ENCODE measurements at regions of chr3 and their contacts with region 1.

Region 1: DNA sequence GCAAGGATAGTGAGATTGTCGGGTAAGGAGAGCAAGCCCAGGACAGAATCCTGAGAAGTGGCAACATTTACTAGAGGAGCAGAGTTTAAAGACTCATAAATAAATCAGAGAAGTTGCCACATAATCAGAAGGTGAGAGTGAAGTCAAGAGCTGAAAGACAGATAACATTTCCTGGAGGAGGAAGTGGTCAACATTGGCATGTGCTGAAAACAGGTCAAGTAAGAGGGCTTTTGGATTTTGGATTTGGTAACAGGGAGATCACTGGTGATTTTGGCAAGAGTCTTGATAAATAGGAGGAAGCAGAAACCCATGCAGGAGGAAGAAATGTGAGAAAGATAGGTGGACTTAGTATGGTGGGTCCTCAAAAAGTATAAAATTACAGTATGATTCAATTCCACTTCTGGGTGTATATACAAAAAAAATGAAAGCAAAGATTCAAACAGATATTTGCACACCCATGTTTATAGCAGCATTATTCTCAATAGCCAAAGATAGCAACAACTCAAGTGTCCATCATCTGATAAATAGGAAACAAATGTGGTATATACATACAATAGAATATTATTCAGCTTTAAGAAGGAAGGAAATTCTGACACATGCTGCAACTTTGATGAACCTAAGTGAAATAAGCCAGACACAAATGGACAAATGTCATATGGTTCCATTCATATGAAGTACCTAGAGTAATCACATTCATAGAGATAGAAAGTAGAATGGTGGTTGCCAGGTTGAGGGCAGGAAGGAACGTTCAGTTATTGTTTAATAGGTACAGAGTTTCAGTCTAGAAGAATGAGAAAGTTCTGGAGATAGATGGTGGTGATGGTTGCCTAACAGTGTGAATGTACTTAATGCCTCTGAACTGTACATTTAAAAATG is 27.3 kb upstream of the MBNL1 start:
- DNase-seq: no peak
- H3K4me3 Mint-ChIP-seq: peak overlapping the region; percentile 41
- H3K27ac Mint-ChIP-seq: peak overlapping the region; percentile 97
- H3K4me1 Mint-ChIP-seq: peaks cover 53% of the 10 kb centered on the region
- H3K27me3 Mint-ChIP-seq: no peaks in the 10 kb centered on the region

Region 2: DNA sequence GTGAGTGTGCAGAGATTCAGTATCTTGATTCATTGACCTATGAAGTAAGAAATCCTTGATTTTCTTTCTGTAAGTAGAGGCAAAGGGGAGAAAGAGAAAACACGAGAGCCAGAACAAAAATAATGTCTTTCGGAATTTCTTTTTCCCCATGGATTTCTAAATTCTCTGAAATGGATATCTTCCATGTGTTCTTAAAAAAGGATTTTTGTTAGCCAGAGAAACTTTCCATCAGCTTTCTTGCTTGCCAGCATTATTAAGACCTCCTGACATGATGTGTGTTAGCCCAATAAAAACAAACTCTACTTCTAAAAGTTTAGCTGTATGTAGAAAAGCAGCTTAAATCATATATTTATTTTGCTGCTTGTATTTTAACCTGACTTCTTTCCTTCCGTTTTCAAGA is 630.0 kb before region 1 on chr3:
- CTCF ChIA-PET with region 1: no interaction called
- POLR2A ChIA-PET with region 1: no interaction called
- DNase-seq: no peak
- H3K4me3 Mint-ChIP-seq: no peak overlapping the region
- H3K27ac Mint-ChIP-seq: no peak overlapping the region
- H3K4me1 Mint-ChIP-seq: no peaks in the 10 kb centered on the region
- H3K27me3 Mint-ChIP-seq: no peaks in the 10 kb centered on the region

Region 3: DNA sequence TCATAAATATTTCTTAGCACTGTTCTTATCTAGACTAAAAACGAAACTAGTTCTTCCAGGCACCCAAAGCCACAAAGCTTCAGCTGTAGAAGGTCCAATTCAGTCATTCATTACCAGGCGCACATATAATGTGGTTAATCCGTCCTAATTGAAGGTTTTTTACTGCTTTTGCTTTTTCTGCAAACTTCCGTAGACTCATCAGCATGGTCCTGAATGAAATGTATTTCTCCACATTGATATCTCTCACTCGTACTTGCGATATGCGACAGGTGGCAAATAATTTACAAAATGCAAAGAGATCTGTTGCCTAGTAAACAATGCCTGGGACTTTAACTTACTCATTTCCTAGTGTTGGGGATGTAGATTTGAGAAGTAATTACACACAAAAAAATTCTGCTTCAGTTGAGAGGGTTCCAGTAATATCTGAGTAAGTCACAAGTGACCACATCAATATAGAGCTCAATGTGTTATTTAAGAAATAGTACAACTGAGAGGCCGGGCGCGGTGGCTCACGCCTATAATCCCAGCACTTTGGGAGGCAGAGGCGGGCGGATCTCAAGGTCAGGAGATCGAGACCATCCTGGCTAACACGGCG is 47.6 kb before region 1 on chr3:
- CTCF ChIA-PET with region 1: interaction called, 13 read pairs
- POLR2A ChIA-PET with region 1: interaction called, 139 read pairs
- DNase-seq: peak; percentile 48
- H3K4me3 Mint-ChIP-seq: peak overlapping the region; percentile 75
- H3K27ac Mint-ChIP-seq: peak overlapping the region; percentile 87
- H3K4me1 Mint-ChIP-seq: peaks cover 80% of the 10 kb centered on the region
- H3K27me3 Mint-ChIP-seq: no peaks in the 10 kb centered on the region

Region 4: DNA sequence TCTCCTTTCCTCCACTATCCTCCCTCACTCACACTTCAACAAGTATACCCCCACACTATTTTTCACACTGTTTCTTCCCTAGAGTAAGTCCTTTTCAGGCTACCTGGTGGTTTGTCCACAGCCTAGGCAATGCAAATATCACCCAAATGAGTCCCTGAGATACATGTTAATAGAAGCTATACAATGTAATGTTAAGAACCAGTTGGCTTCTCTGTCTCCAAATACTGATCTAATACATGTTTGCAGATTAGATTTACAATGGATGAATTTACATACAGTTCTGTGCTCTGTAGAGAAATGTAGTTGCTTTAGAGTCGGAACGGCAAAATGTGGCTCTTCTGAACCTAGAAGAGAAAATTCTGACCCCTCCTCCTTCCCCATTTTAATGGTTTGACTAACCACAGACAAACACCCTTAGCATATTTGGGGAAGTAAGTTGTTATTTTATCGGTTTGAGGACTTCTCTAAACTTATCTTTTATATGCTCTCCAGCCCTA is 36.2 kb before region 1 on chr3:
- CTCF ChIA-PET with region 1: interaction called, 15 read pairs
- POLR2A ChIA-PET with region 1: interaction called, 139 read pairs
- DNase-seq: no peak
- H3K4me3 Mint-ChIP-seq: peak overlapping the region; percentile 78
- H3K27ac Mint-ChIP-seq: peak overlapping the region; percentile 80
- H3K4me1 Mint-ChIP-seq: peaks cover 65% of the 10 kb centered on the region
- H3K27me3 Mint-ChIP-seq: no peaks in the 10 kb centered on the region

Region 5: GRCh38 chr3:152258448-152259393 is 17.3 kb after region 1 on chr3:
- CTCF ChIA-PET with region 1: interaction called, 13 read pairs
- POLR2A ChIA-PET with region 1: interaction called, 171 read pairs
- DNase-seq: peak; percentile 67
- H3K4me3 Mint-ChIP-seq: peak overlapping the region; percentile 62
- H3K27ac Mint-ChIP-seq: peak overlapping the region; percentile 91
- H3K4me1 Mint-ChIP-seq: peaks cover 78% of the 10 kb centered on the region
- H3K27me3 Mint-ChIP-seq: no peaks in the 10 kb centered on the region

Region 6: DNA sequence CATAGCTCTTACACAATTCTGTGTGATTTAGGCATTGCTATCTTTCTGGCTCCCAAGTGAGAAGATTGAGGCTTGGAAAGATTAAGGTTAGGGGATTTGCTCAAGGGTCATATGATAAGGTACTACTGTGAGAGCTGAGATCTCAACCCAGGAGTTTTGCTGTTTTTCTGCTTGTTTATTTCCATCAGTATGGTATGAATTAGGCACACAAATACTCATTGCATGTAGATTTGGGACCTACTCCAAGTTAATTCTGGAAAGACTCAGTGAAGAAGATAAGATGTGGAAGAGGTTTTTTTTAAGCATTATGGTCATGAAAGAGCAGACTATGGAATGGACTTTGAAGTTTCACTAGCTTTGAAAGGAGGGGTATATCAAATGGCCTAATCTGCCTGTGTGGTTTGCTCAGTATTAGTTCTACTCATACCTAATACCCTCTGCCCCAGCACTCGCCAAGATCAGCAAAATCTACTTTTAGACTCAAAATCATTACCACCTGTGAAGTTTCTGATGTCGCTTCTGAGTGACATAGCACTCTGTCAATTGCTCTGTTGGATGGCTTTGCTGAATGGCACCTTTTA is 39.8 kb after region 1 on chr3:
- CTCF ChIA-PET with region 1: interaction called, 3 read pairs
- POLR2A ChIA-PET with region 1: interaction called, 34 read pairs
- DNase-seq: no peak
- H3K4me3 Mint-ChIP-seq: peak overlapping the region; percentile 15
- H3K27ac Mint-ChIP-seq: peak overlapping the region; percentile 68
- H3K4me1 Mint-ChIP-seq: peaks cover 79% of the 10 kb centered on the region
- H3K27me3 Mint-ChIP-seq: no peaks in the 10 kb centered on the region